Activated T-helper 2 cell treated with anti-CD3 and anti-CD28 coated beads, Interferon-gamma antibody, Interleukin-2, Interleukin-4, amounts not matched to agents 10 μg/mL and 5 μg/mL and 100 μg/mL, durations not matched to agents 14 hours and 24 hours and 36 hours (primary cell): ENCODE measurements at regions of chr16 and their contacts with region 1.

Region 1: GRCh38 chr16:11613381-11614303 is 26.9 kb upstream of the LITAF start:
- DNase-seq: no peak
- H3K4me3 Mint-ChIP-seq: no peak overlapping the region
- H3K27ac Mint-ChIP-seq: no peak overlapping the region
- H3K4me1 Mint-ChIP-seq: peaks cover 8% of the 10 kb centered on the region
- H3K27me3 Mint-ChIP-seq: peaks cover 5% of the 10 kb centered on the region

Region 2: DNA sequence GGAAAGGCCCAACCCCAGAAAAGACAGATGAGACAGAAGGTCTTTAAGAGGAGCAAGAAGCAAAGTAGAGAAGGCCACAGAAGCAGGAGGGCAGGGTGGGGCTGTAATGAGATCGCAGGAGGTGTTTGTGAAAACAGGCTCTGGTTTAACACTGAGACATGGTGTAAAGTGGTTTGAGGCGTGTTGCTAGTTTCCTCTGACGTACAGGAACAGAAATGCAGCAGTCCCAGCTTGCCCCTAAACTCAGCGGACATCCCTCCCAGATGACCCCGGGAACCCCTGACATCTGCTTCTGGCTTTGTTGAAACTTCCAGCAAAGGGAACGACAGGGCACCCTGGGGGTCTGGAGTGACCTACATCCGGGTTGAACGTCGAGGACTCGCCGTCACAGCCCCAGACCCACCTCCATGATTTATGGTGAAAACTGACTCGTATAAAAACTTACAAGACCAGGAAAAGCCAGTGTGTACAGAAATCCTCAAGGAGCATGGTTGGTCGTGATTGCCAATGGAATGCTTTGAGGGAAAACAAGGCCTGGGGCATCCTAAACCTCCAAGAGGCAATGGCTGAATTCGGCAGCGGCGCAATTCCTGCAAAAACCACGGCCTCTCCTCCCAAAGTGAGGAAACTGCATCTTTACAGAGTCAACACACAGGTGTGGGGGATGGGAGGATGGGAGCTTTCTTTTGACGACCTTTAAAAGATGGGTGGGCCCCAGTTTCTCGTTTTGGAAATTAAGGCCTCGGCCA is 52.8 kb before region 1 on chr16:
- intact Hi-C with region 1: loop called (anchors 5 kb)
- DNase-seq: peak; percentile 64
- H3K4me3 Mint-ChIP-seq: peak overlapping the region; percentile 58
- H3K27ac Mint-ChIP-seq: peak overlapping the region; percentile 86
- H3K4me1 Mint-ChIP-seq: peaks cover 56% of the 10 kb centered on the region
- H3K27me3 Mint-ChIP-seq: no peaks in the 10 kb centered on the region

Region 3: DNA sequence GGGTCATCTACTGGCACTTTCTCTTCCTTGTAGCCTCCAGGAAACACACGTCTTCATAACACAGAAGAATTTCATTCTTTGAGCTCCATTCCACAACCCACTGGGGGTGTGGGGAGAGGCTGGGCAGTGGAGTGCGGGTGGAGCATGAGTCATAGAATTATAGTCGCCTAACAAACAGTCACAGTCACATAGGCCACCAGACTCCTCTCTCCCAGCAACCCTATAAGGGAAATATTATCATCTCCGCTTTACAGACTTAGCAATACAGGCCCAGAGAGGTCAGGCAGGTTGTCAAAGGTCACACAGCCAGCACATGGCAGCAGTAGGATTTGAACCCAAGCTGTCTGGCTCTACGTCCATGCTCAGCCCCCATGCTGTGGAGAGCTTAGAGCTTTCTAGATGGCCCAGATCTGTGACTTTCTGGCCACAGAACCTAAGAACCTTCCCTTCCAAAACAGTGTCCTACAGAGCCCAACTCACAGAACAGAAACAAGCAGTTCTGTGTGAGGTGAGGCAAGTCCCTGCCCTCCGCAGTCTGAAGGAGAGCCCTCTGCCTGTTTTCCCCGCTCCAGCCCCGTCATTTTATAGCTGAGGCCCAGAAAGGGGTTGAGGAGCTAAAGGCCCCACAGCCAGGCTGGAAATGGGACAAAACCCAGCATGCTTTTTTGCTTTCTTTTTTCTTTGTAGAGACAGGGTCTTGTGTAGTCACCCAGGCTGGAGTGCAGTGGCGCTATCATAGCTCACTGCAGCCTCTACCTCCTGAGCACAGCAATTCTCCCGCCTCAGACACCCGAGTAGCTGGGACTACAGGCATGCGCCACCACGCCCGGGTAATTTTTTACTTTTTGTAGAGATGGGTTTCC is 16.2 kb before region 1 on chr16:
- intact Hi-C with region 1: no loop called
- DNase-seq: no peak
- H3K4me3 Mint-ChIP-seq: no peak overlapping the region
- H3K27ac Mint-ChIP-seq: no peak overlapping the region
- H3K4me1 Mint-ChIP-seq: peaks cover 5% of the 10 kb centered on the region
- H3K27me3 Mint-ChIP-seq: no peaks in the 10 kb centered on the region

Region 4: DNA sequence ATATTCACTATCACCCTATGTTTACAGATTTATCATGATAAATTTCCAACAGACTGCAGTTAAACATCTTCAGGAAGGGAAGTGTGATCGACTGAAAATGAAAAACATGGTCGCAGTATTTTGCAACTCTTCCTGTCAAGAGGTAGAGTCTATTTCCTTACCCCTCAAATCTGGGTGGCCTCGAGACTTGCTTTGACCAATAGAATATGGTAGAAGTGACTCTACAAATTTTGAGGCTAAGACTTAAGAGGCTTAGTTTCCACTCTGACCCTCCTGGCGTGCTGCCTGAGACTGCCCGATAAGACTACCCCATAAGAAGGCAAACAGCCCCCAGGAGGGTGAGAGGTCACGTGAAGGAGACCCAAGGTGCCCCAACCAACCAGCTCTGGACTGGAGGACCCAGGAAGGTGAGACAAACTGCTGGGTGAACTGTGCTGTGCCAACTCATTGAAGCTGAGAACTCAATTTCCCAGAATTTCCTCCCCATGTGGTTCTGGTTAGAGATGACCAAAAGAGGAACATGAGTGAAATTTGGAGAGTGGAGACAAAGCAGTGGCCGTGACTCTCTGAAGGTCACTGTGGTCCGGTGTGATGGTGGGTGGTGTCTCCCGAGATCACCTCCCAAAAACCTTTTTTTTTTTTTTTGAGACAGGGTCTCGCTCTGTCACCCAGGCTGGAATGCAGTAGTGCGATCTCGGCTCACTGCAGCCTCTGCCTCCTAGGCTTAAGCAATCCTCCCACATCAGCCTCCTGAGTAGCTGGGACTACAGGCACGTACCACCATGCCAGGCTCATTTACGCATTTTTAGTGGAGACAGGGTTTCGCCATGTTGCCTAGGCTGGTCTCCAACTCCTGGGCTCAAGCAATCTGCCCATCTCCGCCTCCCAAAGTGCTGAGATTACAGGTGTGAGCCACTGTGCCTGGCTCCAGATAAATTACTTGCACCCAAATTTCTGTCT is 11.3 kb after region 1 on chr16:
- intact Hi-C with region 1: loop called (anchors 1 kb)
- DNase-seq: no peak
- H3K4me3 Mint-ChIP-seq: no peak overlapping the region
- H3K27ac Mint-ChIP-seq: no peak overlapping the region
- H3K4me1 Mint-ChIP-seq: peaks cover 45% of the 10 kb centered on the region
- H3K27me3 Mint-ChIP-seq: no peaks in the 10 kb centered on the region